ENCODE measurements at regions of chr19 and their contacts with region 1.

Region 1: DNA sequence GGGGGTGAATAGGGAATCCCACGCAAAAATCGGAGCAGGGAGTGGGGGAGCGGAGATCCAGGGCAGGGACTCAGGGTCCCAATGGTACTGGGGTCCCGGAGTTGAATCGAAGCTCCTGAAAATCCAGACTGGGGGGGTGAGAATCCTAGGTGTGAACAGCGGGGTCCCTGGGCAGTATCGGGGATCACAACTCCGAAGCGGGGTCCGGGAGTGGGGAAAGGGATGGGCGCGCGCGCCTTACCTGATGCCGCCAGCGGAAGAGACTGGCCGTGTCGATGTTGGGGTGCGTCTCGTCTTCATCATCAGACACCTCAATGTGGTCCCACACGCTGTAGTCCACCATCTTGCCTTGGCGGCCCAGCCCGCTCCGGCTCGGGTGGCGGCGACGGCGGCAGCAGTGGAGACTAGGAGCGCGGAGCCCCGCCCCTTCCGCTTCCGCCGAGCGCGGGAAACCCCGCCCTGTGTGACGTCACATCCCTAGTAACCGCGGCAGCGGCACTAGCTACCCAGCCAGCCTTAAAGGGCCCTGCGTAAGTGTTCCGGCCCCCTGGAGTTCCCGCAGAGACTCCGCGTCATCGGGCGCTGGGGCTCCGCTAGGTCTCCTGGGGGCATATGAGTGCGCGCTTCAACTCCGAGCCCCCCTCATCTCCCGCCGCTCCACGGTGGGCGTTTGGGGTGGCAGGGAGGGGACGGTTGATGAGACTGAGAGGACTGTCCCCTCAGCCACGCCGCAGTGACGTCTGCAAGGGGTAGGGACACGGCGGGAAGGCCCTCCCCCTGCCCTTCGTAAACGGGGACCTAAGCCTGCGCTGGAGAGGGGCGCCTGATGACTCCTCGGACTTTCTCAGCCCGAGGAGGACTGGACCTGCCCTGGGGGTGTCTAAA is at the start of gene CDC37:
- DNase-seq: peak; percentile 99
- ATAC-seq: peak; percentile 80
- H3K4me3 Mint-ChIP-seq: peak within 1 kb of the TSS; percentile 95
- H3K27ac Mint-ChIP-seq: peak within 1 kb of the TSS; percentile 85
- H3K4me1 Mint-ChIP-seq: peaks cover 75% of the 10 kb centered on the region
- H3K27me3 Mint-ChIP-seq: no peaks in the 10 kb centered on the region
- CTCF ChIP-seq: no peak
- total RNA-seq, gene CDC37: 172 and 173 TPM in 2 replicates

Region 2: DNA sequence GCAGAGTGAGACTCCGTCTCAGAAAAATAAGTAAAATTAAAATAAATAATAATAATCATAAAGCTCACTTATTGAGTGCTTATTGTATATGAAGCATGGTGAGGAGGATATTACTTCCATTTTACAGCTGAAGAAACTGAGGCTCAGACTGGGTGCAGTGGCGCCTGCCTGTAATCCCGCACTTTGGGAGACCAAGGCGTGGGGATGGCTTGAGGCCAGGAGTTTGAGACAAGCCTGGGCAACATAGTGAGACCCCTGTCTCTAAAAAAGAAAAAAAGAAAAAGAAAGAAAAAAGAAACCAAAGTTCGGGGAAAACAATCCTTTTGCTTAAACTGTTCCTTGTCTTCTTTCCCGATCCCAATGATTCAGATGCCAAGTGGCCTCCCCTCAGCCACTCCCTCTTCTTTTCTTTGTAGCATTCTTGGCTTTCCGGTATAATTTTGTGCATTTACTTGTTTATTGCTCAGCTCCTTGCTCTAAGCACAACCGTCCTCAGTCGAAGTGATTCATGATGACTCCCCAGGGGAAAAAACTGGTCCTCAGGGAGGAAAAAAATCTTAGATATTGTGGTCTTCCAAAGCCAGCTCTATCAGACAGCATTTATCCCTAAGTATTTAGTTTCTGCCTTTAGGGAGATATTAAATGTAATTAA is 282.7 kb before region 1 on chr19:
- CTCF ChIA-PET with region 1: no interaction called
- POLR2A ChIA-PET with region 1: no interaction called
- intact Hi-C with region 1: no loop called
- DNase-seq: no peak
- ATAC-seq: no peak
- H3K4me3 Mint-ChIP-seq: no peak overlapping the region
- H3K27ac Mint-ChIP-seq: no peak overlapping the region
- H3K4me1 Mint-ChIP-seq: peaks cover 29% of the 10 kb centered on the region
- H3K27me3 Mint-ChIP-seq: no peaks in the 10 kb centered on the region
- CTCF ChIP-seq: no peak

Region 3: GRCh38 chr19:10279737-10280442 is 123.5 kb before region 1 on chr19:
- CTCF ChIA-PET with region 1: no interaction called
- POLR2A ChIA-PET with region 1: interaction called, 11 read pairs
- intact Hi-C with region 1: no loop called
- DNase-seq: no peak
- ATAC-seq: no peak
- H3K4me3 Mint-ChIP-seq: no peak overlapping the region
- H3K27ac Mint-ChIP-seq: peak overlapping the region; percentile 59
- H3K4me1 Mint-ChIP-seq: peaks cover 30% of the 10 kb centered on the region
- H3K27me3 Mint-ChIP-seq: no peaks in the 10 kb centered on the region
- CTCF ChIP-seq: no peak

Region 4: GRCh38 chr19:10416380-10417257 is 13.2 kb after region 1 on chr19:
- CTCF ChIA-PET with region 1: interaction called, 84 read pairs
- POLR2A ChIA-PET with region 1: interaction called, 541 read pairs
- intact Hi-C with region 1: loop called (anchors 1 kb)
- DNase-seq: peak; percentile 97
- ATAC-seq: peak; percentile 68
- H3K4me3 Mint-ChIP-seq: peak overlapping the region; percentile 78
- H3K27ac Mint-ChIP-seq: peak overlapping the region; percentile 80
- H3K4me1 Mint-ChIP-seq: peaks cover 70% of the 10 kb centered on the region
- H3K27me3 Mint-ChIP-seq: peaks cover 29% of the 10 kb centered on the region
- CTCF ChIP-seq: peak; percentile 79

Region 5: DNA sequence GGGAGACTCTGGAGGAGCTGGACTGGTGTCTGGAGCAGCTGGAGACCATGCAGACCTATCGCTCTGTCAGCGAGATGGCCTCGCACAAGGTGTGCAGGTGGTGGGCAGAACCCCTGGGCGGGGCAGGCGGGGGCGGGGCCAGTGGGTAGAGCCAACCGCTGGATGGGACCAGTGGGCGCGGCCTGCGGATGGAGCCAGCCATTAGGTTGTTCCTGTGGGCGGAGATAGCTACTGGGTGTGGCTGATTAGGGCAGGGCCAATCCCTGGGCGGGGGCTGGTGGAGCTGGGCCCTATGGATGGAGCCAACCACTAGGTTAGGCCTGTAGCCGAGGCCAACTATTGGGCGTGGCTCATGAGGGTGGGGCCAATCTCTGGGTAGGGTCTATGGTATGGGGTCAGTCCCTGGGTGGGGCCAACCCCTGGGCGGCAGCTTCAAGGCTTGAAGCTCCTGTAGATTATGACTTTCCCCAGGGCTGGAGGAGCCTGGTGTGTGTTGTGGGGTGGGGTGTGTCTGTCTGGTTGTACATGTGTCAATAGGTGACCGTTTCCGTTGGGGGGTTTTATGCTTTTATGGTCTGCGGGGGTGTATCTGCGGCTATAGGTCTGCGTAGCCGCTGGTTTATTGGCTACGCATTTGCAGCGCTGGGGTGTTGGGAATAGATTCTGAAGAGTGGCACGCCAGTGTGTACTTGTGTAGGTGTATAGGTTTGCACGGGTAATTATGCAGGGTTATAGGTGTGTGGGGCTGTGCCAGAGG is 47.7 kb after region 1 on chr19:
- CTCF ChIA-PET with region 1: interaction called, 3 read pairs
- POLR2A ChIA-PET with region 1: interaction called, 10 read pairs
- intact Hi-C with region 1: no loop called
- DNase-seq: no peak
- ATAC-seq: no peak
- H3K4me3 Mint-ChIP-seq: no peak overlapping the region
- H3K27ac Mint-ChIP-seq: no peak overlapping the region
- H3K4me1 Mint-ChIP-seq: peaks cover 6% of the 10 kb centered on the region
- H3K27me3 Mint-ChIP-seq: no peaks in the 10 kb centered on the region
- CTCF ChIP-seq: no peak

Region 6: GRCh38 chr19:10502524-10503001 is 99.2 kb after region 1 on chr19:
- CTCF ChIA-PET with region 1: no interaction called
- POLR2A ChIA-PET with region 1: interaction called, 4 read pairs
- intact Hi-C with region 1: loop called (anchors 1 kb)
- DNase-seq: peak; percentile 90
- ATAC-seq: peak; percentile 91
- H3K4me3 Mint-ChIP-seq: peak overlapping the region; percentile 87
- H3K27ac Mint-ChIP-seq: peak overlapping the region; percentile 90
- H3K4me1 Mint-ChIP-seq: peaks cover 23% of the 10 kb centered on the region
- H3K27me3 Mint-ChIP-seq: no peaks in the 10 kb centered on the region
- CTCF ChIP-seq: no peak

Region 7: GRCh38 chr19:10695401-10696398 is 292.3 kb after region 1 on chr19:
- CTCF ChIA-PET with region 1: interaction called, 3 read pairs
- POLR2A ChIA-PET with region 1: no interaction called
- intact Hi-C with region 1: loop called (anchors 1 kb)
- DNase-seq: peak; percentile 79
- ATAC-seq: peak; percentile 98
- H3K4me3 Mint-ChIP-seq: peak overlapping the region; percentile 76
- H3K27ac Mint-ChIP-seq: peak overlapping the region; percentile 26
- H3K4me1 Mint-ChIP-seq: peaks cover 17% of the 10 kb centered on the region
- H3K27me3 Mint-ChIP-seq: peaks cover 5% of the 10 kb centered on the region
- CTCF ChIP-seq: no peak